A549 (cell line): ENCODE measurements at regions of chr9 and their contacts with region 1.

Region 1: GRCh38 chr9:124551472-124552272 is 44.5 kb upstream of the NR5A1 start:
- DNase-seq: peak; percentile 66 to 72
- ATAC-seq: peak; percentile 96
- H3K4me3 ChIP-seq: no peak overlapping the region
- H3K27ac ChIP-seq: 0 out of 6 replicates have a peak overlapping the region, but pooled peaks of 1 of the 2 experiments have one; percentile 1
- H3K4me1 ChIP-seq: peaks cover 10% of the 10 kb centered on the region; the same call in 2 of the 3 replicates
- CTCF ChIP-seq: peak; percentile 77
- EP300 ChIP-seq: no peak
- POLR2A ChIP-seq: no peak
- RAD21 ChIP-seq: peak; percentile 73 to 82

Region 2: DNA sequence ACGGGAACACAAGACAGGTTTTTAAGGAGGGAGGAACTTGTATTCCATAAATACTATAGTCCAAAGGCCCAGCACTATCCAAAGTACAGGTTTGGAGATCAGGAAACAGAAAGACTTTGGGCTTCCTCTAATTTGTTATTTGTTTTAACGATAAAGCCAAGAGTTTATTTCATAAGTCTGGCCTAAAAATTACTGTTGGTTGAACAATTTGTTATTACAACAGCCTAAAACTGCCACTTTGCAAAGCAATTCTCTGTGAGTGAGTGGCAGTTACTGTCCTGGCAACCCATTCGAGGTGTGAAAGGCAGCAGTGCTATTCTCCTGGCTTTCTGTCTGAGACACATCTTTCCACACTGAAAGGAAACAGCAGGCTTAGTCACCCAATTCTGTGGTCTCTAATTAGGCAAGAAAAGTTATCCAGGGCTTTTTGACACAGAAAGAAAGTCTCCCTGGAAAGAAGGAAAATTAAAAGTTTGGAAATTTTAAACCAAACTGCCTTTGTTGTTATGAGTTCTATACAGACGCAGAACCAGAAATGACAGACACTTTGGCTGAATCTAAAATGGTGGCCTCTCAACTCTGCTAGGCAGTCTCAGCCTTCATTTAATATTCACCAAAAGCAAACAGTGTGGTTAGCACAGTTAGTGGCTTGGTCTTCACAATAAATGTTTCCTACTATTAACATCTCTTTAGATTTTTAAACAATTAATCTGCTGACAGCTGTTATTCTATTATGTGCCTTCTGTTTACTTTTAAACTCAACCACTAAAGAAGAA is 170.3 kb before region 1 on chr9:
- CTCF ChIA-PET with region 1: no interaction called
- POLR2A ChIA-PET with region 1: no interaction called
- DNase-seq: no peak
- ATAC-seq: no peak
- H3K4me3 ChIP-seq: no peak overlapping the region
- H3K27ac ChIP-seq: no peak overlapping the region
- H3K4me1 ChIP-seq: peaks cover 9% of the 10 kb centered on the region
- CTCF ChIP-seq: no peak
- EP300 ChIP-seq: no peak
- POLR2A ChIP-seq: no peak
- RAD21 ChIP-seq: no peak

Region 3: DNA sequence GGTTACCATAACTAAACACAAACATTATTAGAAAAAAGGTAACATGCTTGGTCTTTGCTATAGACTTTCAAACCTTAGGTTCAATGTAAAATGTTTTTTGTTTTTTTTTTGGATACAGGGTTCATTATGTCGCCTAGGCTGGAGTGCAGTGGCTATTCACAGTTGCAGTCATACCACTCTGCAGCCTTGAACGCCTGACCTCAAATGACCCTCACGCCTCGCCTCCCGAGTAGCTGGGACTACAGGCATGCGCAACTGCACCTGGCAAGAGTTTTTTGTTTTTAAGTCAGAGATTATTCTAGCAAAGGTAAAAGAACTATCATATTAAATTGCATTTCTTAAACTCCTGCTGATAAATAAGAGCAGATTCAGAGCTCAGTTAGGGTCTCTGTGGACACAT is 10.7 kb after region 1 on chr9:
- CTCF ChIA-PET with region 1: interaction called, 59 read pairs
- POLR2A ChIA-PET with region 1: no interaction called
- DNase-seq: no peak
- ATAC-seq: no peak
- H3K4me3 ChIP-seq: no peak overlapping the region
- H3K27ac ChIP-seq: no peak overlapping the region
- H3K4me1 ChIP-seq: peaks cover 3% of the 10 kb centered on the region; the same call in 1 of the 3 replicates
- CTCF ChIP-seq: no peak
- EP300 ChIP-seq: no peak
- POLR2A ChIP-seq: no peak
- RAD21 ChIP-seq: no peak

Region 4: DNA sequence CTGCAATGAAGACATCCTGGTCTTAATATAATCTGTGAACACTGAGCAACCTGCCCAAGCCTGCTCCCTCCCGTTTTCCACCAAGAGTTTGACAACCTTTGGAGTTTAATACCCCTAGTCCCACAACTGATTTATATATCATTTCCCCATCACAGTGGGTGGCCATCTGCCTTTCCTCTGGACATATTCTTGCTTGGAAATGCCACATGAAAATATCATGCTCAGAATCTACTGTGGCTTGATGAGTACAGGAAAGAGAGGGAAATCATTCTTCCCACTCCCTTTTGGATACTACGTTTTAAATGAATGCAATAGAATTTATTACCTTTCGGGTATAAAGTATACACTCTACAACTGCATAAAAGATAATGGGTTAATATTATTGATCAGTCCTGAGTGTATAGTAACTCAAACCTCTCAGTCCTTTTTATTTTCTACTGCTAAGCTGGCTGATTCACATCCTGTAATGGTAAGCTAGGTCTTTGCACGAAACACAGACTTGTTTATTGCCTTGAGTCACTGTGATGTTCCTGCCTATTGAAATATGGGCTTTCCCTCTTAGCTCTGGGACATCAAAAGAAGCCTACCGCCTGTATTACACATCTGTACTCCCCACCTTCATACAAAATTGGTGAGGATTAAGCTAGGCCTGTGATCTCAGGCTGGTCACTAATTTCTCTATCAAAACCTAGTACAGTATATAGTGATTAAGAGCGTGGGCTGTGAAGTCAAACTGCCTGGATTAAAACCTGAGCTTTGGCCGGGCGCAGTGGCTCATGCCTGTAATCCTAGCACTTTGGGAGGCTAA is 23.1 kb after region 1 on chr9:
- CTCF ChIA-PET with region 1: interaction called, 13 read pairs
- POLR2A ChIA-PET with region 1: no interaction called
- DNase-seq: peak in 1 of 2 experiments; percentile 20
- ATAC-seq: peak; percentile 47 to 57; a peak in 2 of 6 replicates
- H3K4me3 ChIP-seq: no peak overlapping the region
- H3K27ac ChIP-seq: no peak overlapping the region
- H3K4me1 ChIP-seq: peaks cover 18% of the 10 kb centered on the region; the same call in 2 of the 3 replicates
- CTCF ChIP-seq: no peak
- EP300 ChIP-seq: no peak
- POLR2A ChIP-seq: no peak
- RAD21 ChIP-seq: no peak

Region 5: GRCh38 chr9:124593651-124594058 is 42.0 kb after region 1 on chr9:
- CTCF ChIA-PET with region 1: interaction called, 40 read pairs
- POLR2A ChIA-PET with region 1: no interaction called
- DNase-seq: no peak
- ATAC-seq: no peak
- H3K4me3 ChIP-seq: no peak overlapping the region
- H3K27ac ChIP-seq: no peak overlapping the region
- H3K4me1 ChIP-seq: peaks cover 21% of the 10 kb centered on the region; the same call in 2 of the 3 replicates
- CTCF ChIP-seq: no peak
- EP300 ChIP-seq: no peak
- POLR2A ChIP-seq: no peak
- RAD21 ChIP-seq: no peak

Region 6: DNA sequence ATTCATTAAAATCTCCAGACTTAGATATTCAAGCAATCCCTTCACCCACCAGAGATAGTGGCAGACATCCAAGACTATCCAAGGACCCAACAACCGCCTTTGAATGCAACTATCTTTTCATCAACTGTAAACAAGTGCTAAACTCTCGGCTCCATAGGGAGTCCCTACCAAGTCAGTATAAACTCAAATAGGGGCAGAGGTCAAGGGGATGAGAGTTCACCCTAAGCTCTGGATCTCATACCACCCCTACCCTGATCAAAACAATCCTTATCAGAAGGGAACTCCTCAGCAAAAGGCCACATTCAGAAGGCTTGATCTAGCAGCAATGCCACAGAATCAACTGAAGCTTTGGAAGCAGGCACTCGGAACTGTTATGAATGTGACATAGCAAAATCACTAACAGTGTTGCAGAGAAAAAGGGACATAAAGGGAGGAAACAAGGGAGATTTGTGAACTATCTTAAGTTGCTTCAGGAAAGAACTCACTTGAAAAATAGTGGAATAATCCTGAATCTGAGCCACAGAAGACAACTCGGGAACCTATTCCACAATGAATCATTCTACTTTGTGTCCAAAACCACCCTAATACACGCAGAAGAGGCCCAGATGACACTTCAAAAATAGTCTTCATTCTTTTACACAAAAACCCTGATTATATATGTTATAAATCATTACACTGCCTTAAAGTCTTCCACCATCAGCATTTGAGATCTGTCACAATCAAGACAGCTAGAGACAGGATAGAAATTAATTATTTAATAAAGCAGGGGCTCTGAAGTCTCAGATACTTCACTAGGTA is 169.6 kb after region 1 on chr9:
- CTCF ChIA-PET with region 1: interaction called, 18 read pairs
- POLR2A ChIA-PET with region 1: no interaction called
- DNase-seq: peak in 1 of 2 experiments; percentile 40
- ATAC-seq: peak; percentile 34 to 83; a peak in 3 of 6 replicates
- H3K4me3 ChIP-seq: no peak overlapping the region
- H3K27ac ChIP-seq: peak overlapping the region; percentile 15 to 68; a peak in 4 of 6 replicates
- H3K4me1 ChIP-seq: peaks cover 18% of the 10 kb centered on the region
- CTCF ChIP-seq: no peak
- EP300 ChIP-seq: no peak
- POLR2A ChIP-seq: no peak
- RAD21 ChIP-seq: no peak

Region 7: GRCh38 chr9:124735121-124735520 is 183.4 kb after region 1 on chr9:
- CTCF ChIA-PET with region 1: interaction called, 12 read pairs
- POLR2A ChIA-PET with region 1: no interaction called
- DNase-seq: no peak
- ATAC-seq: peak; percentile 24 to 69; a peak in 3 of 6 replicates
- H3K4me3 ChIP-seq: no peak overlapping the region
- H3K27ac ChIP-seq: peak overlapping the region in 1 of 2 experiments; percentile 50; a peak in 1 of 6 replicates
- H3K4me1 ChIP-seq: peaks cover 20% of the 10 kb centered on the region
- CTCF ChIP-seq: no peak
- EP300 ChIP-seq: no peak
- POLR2A ChIP-seq: no peak
- RAD21 ChIP-seq: no peak

Region 8: GRCh38 chr9:124764774-124765438 is 213.2 kb after region 1 on chr9:
- CTCF ChIA-PET with region 1: interaction called, 31 read pairs
- POLR2A ChIA-PET with region 1: no interaction called
- DNase-seq: peak; percentile 50 to 53
- ATAC-seq: peak; percentile 54 to 76; a peak in 4 of 6 replicates
- H3K4me3 ChIP-seq: no peak overlapping the region
- H3K27ac ChIP-seq: no peak overlapping the region
- H3K4me1 ChIP-seq: peaks cover 22% of the 10 kb centered on the region; the same call in 2 of the 3 replicates
- CTCF ChIP-seq: peak; percentile 50
- EP300 ChIP-seq: no peak
- POLR2A ChIP-seq: no peak
- RAD21 ChIP-seq: peak; percentile 53 to 61